ENCODE measurements at regions of chr21 and their contacts with region 1.

Region 1: DNA sequence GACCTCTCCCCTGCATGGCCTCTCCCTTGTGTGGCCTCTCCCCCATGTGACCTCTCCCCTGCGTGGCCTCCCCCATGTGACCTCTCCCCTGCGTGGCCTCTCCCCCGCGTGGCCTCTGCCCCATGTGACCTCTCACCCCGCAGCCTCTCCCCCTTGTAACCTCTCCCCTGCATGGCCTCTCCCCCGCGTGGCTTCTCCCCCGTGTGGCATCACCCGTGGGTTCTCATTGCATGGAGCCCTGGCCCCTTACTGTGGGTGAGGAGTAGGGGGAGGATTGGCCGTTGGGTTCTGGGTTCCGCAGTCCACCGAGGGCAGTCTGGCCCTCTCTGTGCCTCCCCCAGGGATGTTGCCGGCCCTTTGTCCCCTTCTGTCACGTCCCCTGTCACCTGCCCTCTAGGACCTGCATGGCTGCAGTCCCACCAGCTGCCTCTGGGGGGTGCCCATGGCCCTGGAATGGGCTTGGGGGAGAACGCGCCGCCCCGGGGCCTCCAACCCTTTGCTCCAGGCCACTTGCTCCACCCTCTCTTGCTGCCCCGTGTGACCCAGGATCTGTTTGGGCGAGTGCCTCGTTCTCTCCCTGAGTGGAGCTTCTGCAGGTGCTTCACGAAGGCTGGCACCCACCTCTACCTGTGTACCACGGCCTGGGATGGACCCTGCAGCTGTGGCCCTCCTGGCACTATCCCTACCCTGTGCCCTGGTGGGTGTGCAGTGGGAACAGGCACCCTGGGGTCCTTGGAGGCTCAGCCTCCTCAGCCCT is 21.3 kb downstream of the RRP1 start:
- DNase-seq: peak; percentile 92 to 96 (median 94)
- ATAC-seq: peak; percentile 92
- H3K4me3 ChIP-seq: no peak overlapping the region
- H3K27ac ChIP-seq: peak overlapping the region; percentile 13; the same call in 1 of the 3 replicates
- H3K4me1 ChIP-seq: peaks cover 15 to 89% of the 10 kb centered on the region in 2 experiments
- H3K27me3 ChIP-seq: no peaks in the 10 kb centered on the region
- CTCF ChIP-seq: peak; percentile 98 to 99 (median 99)
- EP300 ChIP-seq: no peak
- POLR2A ChIP-seq: peak; percentile 51; the same call in 1 of the 2 replicates
- RAD21 ChIP-seq: peak; percentile 99 to 100

Region 2: DNA sequence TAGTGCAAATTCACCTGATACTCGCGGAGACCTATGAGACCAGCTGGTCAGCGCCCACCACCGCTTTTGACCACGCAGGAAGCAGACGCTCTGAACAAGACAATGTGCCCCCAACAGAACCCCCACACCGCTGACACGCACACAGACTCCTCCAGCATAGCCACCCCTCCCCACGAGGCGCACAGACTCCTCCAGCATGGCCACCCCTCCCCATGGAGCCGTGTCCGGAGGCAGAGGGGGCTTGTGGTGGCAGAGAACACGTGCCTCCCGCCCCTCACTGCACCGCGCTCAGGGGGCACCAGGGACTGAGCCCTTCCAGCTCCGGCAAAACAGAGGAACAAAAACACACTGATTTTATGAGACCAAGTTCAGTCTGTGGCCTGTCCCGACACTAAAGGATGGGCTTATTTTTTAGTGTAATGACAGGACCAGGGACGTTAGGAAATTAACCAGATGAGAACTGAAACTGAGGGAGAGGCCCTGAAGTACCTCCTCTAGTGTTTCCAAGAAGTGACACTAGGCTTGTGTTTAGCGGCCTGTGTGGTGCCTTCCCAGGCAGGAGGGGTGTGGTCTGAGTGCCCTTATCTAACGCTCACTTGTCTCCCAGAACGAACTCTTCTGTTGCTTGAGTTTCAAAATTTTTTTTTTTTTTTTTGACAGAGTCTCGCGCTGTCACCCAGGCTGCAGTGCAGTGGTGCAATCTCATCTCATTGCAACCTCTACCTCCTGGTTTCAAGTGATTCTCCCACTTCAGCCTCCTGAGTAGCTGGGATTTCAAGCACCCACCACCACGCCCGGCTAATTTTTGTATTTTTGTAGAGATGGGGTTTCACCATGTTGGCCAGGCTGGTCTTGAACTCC is 44.3 kb after region 1 on chr21:
- CTCF ChIA-PET with region 1: no interaction called
- POLR2A ChIA-PET with region 1: no interaction called
- in situ Hi-C with region 1: no loop called
- intact Hi-C with region 1: loop called (anchors 2 kb)
- DNase-seq: peak; percentile 88 to 97 (median 92)
- ATAC-seq: peak; percentile 96
- H3K4me3 ChIP-seq: peak overlapping the region; percentile 15; the same call in 1 of the 2 replicates
- H3K27ac ChIP-seq: peak overlapping the region; percentile 89
- H3K4me1 ChIP-seq: peaks cover 33 to 45% of the 10 kb centered on the region in 2 experiments
- H3K27me3 ChIP-seq: no peaks in the 10 kb centered on the region
- CTCF ChIP-seq: peak in 1 of 3 experiments; percentile 28; a peak in 1 of 6 replicates
- EP300 ChIP-seq: peak; percentile 90
- POLR2A ChIP-seq: peak; percentile 92
- RAD21 ChIP-seq: peak; percentile 28 to 38; a peak in 3 of 4 replicates

Region 3: DNA sequence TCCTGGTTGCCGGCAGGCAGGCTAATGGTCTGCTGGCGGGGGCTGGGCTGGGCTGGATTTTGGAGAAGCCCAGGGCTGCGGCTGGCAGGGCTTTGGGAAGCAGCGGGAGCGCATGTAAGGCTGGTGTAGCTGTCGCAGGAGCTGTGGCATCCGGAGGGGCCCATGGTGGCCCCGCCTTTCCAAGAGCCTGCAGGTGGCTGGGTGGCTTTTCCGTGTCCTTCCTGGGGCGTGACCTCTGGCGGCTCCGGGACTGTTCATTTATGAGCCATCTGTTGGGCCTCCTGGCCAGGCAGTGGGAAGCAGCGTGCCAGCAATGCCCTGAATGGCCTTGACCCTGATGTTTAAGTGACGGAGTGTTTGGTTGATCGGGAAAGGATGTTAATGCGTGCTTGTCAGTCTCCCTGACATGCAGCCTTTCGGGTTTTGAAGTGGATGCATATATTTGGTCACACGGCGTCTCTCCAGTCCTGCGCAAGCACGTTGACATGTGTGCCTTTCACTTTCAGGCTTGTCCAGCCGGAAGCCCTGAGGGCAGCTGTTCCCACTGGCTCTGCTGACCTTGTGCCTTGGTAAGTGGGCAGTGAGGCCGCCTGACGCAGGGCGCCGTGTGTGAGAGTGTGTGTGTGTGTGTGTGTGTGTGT is 92.9 kb after region 1 on chr21:
- CTCF ChIA-PET with region 1: no interaction called
- POLR2A ChIA-PET with region 1: interaction called, 3 read pairs
- in situ Hi-C with region 1: no loop called
- intact Hi-C with region 1: loop called (anchors 5 kb)
- DNase-seq: peak in 1 of 4 experiments; percentile 14
- ATAC-seq: no peak
- H3K4me3 ChIP-seq: no peak overlapping the region
- H3K27ac ChIP-seq: no peak overlapping the region
- H3K4me1 ChIP-seq: peaks cover 5 to 29% of the 10 kb centered on the region in 2 experiments; a peak in 2 of 5 replicates
- H3K27me3 ChIP-seq: no peaks in the 10 kb centered on the region
- CTCF ChIP-seq: no peak
- EP300 ChIP-seq: no peak
- POLR2A ChIP-seq: no peak
- RAD21 ChIP-seq: no peak

Region 4: GRCh38 chr21:43938751-43939442 is 128.2 kb after region 1 on chr21:
- CTCF ChIA-PET with region 1: interaction called, 35 read pairs
- POLR2A ChIA-PET with region 1: interaction called, 6 read pairs
- in situ Hi-C with region 1: loop called (anchors 5 kb)
- intact Hi-C with region 1: loop called (anchors 2 kb)
- DNase-seq: peak; percentile 95 to 99 (median 98)
- ATAC-seq: peak; percentile 96
- H3K4me3 ChIP-seq: peak overlapping the region; percentile 23
- H3K27ac ChIP-seq: peak overlapping the region; percentile 68
- H3K4me1 ChIP-seq: peaks cover 20 to 78% of the 10 kb centered on the region in 2 experiments; a peak in 4 of 5 replicates
- H3K27me3 ChIP-seq: no peaks in the 10 kb centered on the region
- CTCF ChIP-seq: peak; percentile 100
- EP300 ChIP-seq: peak; percentile 73
- POLR2A ChIP-seq: no peak
- RAD21 ChIP-seq: peak; percentile 97 to 98

Region 5: DNA sequence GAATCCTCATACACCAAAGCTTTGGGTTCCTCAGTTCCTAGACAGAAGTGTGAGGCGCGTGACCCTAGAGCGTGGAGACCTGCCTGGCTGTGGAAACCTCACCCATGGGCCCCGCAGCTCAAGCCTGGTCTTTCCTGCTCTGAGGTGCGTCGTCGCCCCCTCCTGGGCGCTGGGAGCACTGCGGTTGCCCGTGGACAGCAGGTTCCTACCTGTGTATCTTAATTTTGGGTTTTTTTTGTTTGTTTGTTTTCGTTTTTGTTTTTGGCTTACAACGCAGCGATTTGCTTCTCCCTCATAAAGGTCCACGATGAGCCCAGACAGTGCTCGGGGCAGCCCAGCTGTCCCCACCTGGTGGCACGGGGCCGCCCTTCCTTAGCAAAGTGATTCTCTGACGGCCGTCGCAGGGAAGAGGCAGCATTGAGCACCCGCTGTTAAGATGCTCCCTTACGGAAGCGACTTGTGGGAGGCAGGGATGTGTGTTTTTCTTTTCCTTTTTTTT is 164.9 kb after region 1 on chr21:
- CTCF ChIA-PET with region 1: interaction called, 3 read pairs
- POLR2A ChIA-PET with region 1: interaction called, 5 read pairs
- in situ Hi-C with region 1: no loop called
- intact Hi-C with region 1: loop called (anchors 1 kb)
- DNase-seq: peak; percentile 88 to 92 (median 88)
- ATAC-seq: peak; percentile 96
- H3K4me3 ChIP-seq: no peak overlapping the region
- H3K27ac ChIP-seq: peak overlapping the region; percentile 14; the same call in 1 of the 3 replicates
- H3K4me1 ChIP-seq: peaks cover 14 to 36% of the 10 kb centered on the region in 2 experiments; a peak in 4 of 5 replicates
- H3K27me3 ChIP-seq: no peaks in the 10 kb centered on the region
- CTCF ChIP-seq: peak; percentile 95 to 99 (median 96)
- EP300 ChIP-seq: no peak
- POLR2A ChIP-seq: no peak
- RAD21 ChIP-seq: peak; percentile 81 to 94